ENCODE measurements at regions of chr9 and their contacts with region 1.

Region 1: DNA sequence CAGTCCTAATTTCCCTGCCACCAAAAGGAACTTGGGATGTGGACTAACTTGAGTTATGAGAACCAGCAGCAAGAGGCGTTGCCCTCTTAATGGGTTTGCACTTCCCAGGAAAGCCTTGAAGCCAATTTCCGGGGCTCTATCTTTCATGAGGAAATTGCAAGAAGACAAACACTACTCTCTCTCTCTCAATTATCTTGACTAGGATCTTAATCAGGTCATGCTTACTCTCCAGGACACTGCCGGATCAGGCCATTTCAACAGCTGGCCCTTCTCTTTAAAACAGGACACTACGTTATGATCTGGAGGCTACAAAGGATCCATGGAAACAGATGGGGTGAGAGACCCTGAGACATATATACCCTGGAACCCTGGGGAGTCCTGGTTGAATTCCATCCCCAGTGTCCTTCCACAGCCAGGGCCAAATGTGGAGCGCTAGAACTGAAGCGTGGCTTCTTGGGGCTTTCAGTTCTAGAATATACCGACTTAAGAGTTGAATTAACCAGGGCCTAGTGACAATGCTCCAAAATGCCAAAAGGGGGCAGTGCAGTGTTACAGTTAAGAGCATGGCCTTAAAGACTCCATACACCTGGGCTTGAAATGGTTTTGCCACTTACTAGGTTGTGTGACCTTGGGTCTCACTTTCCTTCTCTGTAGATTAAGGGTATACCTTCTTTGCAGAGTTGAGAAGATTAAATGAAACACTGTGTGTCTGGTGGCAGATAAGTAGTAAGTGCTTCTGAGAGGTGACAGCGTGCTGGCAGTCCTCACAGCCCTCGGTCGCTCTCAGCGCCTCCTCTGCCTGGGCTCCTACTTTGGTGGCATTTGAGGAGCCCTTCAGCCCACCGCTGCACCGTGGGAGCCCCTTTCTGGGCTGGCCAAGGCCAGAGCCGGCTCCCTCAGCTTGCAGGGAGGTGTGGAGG is 21.1 kb downstream of the FAM219A start:
- DNase-seq: peak in 3 of 6 donors; percentile 41 to 67 (median 57)
- ATAC-seq: peak; percentile 66 to 97 (median 96)
- H3K4me3 ChIP-seq: no peak overlapping the region
- H3K27ac ChIP-seq: no peak overlapping the region
- H3K4me1 ChIP-seq: no peaks in the 10 kb centered on the region
- H3K27me3 ChIP-seq: no peaks in the 10 kb centered on the region
- CTCF ChIP-seq: peak; percentile 25 to 68 (median 58)

Region 2: GRCh38 chr9:34490360-34490759 is 53.1 kb after region 1 on chr9:
- intact Hi-C with region 1: no loop called
- DNase-seq: no peak
- ATAC-seq: no peak
- H3K4me3 ChIP-seq: no peak overlapping the region
- H3K27ac ChIP-seq: no peak overlapping the region
- H3K4me1 ChIP-seq: no peaks in the 10 kb centered on the region
- H3K27me3 ChIP-seq: no peaks in the 10 kb centered on the region
- CTCF ChIP-seq: no peak

Region 3: GRCh38 chr9:34500623-34501267 is 63.5 kb after region 1 on chr9:
- intact Hi-C with region 1: loop called in 1 of 3 experiments (anchors 10 kb)
- DNase-seq: peak in 4 of 6 donors; percentile 47 to 75 (median 67)
- ATAC-seq: peak; percentile 35 to 81 (median 74)
- H3K4me3 ChIP-seq: no peak overlapping the region
- H3K27ac ChIP-seq: no peak overlapping the region
- H3K4me1 ChIP-seq: no peaks in the 10 kb centered on the region
- H3K27me3 ChIP-seq: no peaks in the 10 kb centered on the region
- CTCF ChIP-seq: peak; percentile 91 to 97 (median 95)